Prostate gland (tissue), 2 donors: ENCODE measurements at regions of chr3 and their contacts with region 1.

Region 1: GRCh38 chr3:158644345-158644908 is at the start of gene GFM1:
- DNase-seq: peak; percentile 93
- H3K4me3 ChIP-seq: peak within 1 kb of the TSS; percentile 62 to 80
- H3K27ac ChIP-seq: peak within 1 kb of the TSS; percentile 67 to 71
- H3K4me1 ChIP-seq: no peaks in the 10 kb centered on the region
- H3K27me3 ChIP-seq: no peaks in the 10 kb centered on the region
- CTCF ChIP-seq: peak; percentile 56 to 90 (median 86)
- POLR2A ChIP-seq: no peak
- total RNA-seq, gene GFM1: 54.1 to 68.9 TPM

Region 2: GRCh38 chr3:158492685-158493084 is 151.7 kb before region 1 on chr3:
- intact Hi-C with region 1: no loop called
- DNase-seq: no peak
- H3K4me3 ChIP-seq: no peak overlapping the region
- H3K27ac ChIP-seq: no peak overlapping the region
- H3K4me1 ChIP-seq: no peaks in the 10 kb centered on the region
- H3K27me3 ChIP-seq: no peaks in the 10 kb centered on the region
- CTCF ChIP-seq: no peak
- POLR2A ChIP-seq: no peak

Region 3: GRCh38 chr3:158570999-158571974 is 73.1 kb before region 1 on chr3 and contains the start of gene MLF1:
- intact Hi-C with region 1: loop called (anchors 5 kb)
- DNase-seq: peak; percentile 92
- H3K4me3 ChIP-seq: peak within 1 kb of the TSS; percentile 43 to 46
- H3K27ac ChIP-seq: peak within 1 kb of the TSS in 1 of 2 donors; percentile 62
- H3K4me1 ChIP-seq: no peaks in the 10 kb centered on the region
- H3K27me3 ChIP-seq: no peaks in the 10 kb centered on the region
- CTCF ChIP-seq: peak in 2 of 4 experiments; percentile 19 to 27
- POLR2A ChIP-seq: peak; percentile 78
- total RNA-seq, gene MLF1: 7.1 to 65.0 TPM